ENCODE measurements at regions of chr14 and their contacts with region 1.

Region 1: GRCh38 chr14:67426983-67427606 is 15.1 kb upstream of the PLEK2 start:
- DNase-seq: peak; percentile 45 to 86 (median 73)
- ATAC-seq: peak; percentile 98
- H3K4me3 ChIP-seq: no peak overlapping the region
- H3K4me3 Mint-ChIP-seq: no peak overlapping the region
- H3K27ac ChIP-seq: no peak overlapping the region
- H3K27ac Mint-ChIP-seq: no peak overlapping the region
- H3K4me1 ChIP-seq: no peaks in the 10 kb centered on the region
- H3K4me1 Mint-ChIP-seq: peaks cover 2% of the 10 kb centered on the region
- H3K27me3 ChIP-seq: peaks cover 0 to 2% of the 10 kb centered on the region in 2 experiments
- H3K27me3 Mint-ChIP-seq: peaks cover 10% of the 10 kb centered on the region
- CTCF ChIP-seq: peak; percentile 82

Region 2: GRCh38 chr14:67232081-67232480 is 195.0 kb before region 1 on chr14:
- CTCF ChIA-PET with region 1: no interaction called
- POLR2A ChIA-PET with region 1: no interaction called
- intact Hi-C with region 1: no loop called
- DNase-seq: no peak
- ATAC-seq: no peak
- H3K4me3 ChIP-seq: no peak overlapping the region
- H3K4me3 Mint-ChIP-seq: no peak overlapping the region
- H3K27ac ChIP-seq: no peak overlapping the region
- H3K27ac Mint-ChIP-seq: no peak overlapping the region
- H3K4me1 ChIP-seq: no peaks in the 10 kb centered on the region
- H3K4me1 Mint-ChIP-seq: no peaks in the 10 kb centered on the region
- H3K27me3 ChIP-seq: no peaks in the 10 kb centered on the region
- H3K27me3 Mint-ChIP-seq: no peaks in the 10 kb centered on the region
- CTCF ChIP-seq: no peak

Region 3: GRCh38 chr14:67413801-67414769 is 13.0 kb before region 1 on chr14:
- CTCF ChIA-PET with region 1: interaction called, 13 read pairs
- POLR2A ChIA-PET with region 1: no interaction called
- intact Hi-C with region 1: no loop called
- DNase-seq: peak in 3 of 9 experiments; percentile 10 to 15 (median 14)
- ATAC-seq: no peak
- H3K4me3 ChIP-seq: no peak overlapping the region
- H3K4me3 Mint-ChIP-seq: no peak overlapping the region
- H3K27ac ChIP-seq: no peak overlapping the region
- H3K27ac Mint-ChIP-seq: no peak overlapping the region
- H3K4me1 ChIP-seq: peaks cover 4% of the 10 kb centered on the region
- H3K4me1 Mint-ChIP-seq: peaks cover 3% of the 10 kb centered on the region
- H3K27me3 ChIP-seq: no peaks in the 10 kb centered on the region
- H3K27me3 Mint-ChIP-seq: peaks cover 18% of the 10 kb centered on the region
- CTCF ChIP-seq: no peak

Region 4: GRCh38 chr14:67514650-67515385 is 87.7 kb after region 1 on chr14:
- CTCF ChIA-PET with region 1: interaction called, 13 read pairs
- POLR2A ChIA-PET with region 1: no interaction called
- intact Hi-C with region 1: no loop called
- DNase-seq: peak in 8 of 9 experiments; percentile 11 to 75 (median 43)
- ATAC-seq: peak; percentile 71
- H3K4me3 ChIP-seq: peak overlapping the region; percentile 71 to 75
- H3K4me3 Mint-ChIP-seq: peak overlapping the region; percentile 91
- H3K27ac ChIP-seq: peak overlapping the region; percentile 62 to 79
- H3K27ac Mint-ChIP-seq: peak overlapping the region; percentile 89
- H3K4me1 ChIP-seq: peaks cover 16% of the 10 kb centered on the region
- H3K4me1 Mint-ChIP-seq: peaks cover 36% of the 10 kb centered on the region
- H3K27me3 ChIP-seq: no peaks in the 10 kb centered on the region
- H3K27me3 Mint-ChIP-seq: no peaks in the 10 kb centered on the region
- CTCF ChIP-seq: no peak

Region 5: GRCh38 chr14:67532998-67533753 is 106.1 kb after region 1 on chr14 and contains the start of gene PLEKHH1:
- CTCF ChIA-PET with region 1: interaction called, 30 read pairs
- POLR2A ChIA-PET with region 1: interaction called, 3 read pairs
- intact Hi-C with region 1: loop called in 1 of 2 experiments (anchors 5 kb)
- DNase-seq: peak in 7 of 9 experiments; percentile 11 to 66 (median 51)
- ATAC-seq: peak; percentile 80
- H3K4me3 ChIP-seq: peak within 1 kb of the TSS; percentile 24 to 53
- H3K4me3 Mint-ChIP-seq: peak within 1 kb of the TSS; percentile 80
- H3K27ac ChIP-seq: no peak within 1 kb of the TSS
- H3K27ac Mint-ChIP-seq: no peak within 1 kb of the TSS
- H3K4me1 ChIP-seq: peaks cover 5% of the 10 kb centered on the region
- H3K4me1 Mint-ChIP-seq: peaks cover 7% of the 10 kb centered on the region
- H3K27me3 ChIP-seq: no peaks in the 10 kb centered on the region
- H3K27me3 Mint-ChIP-seq: peaks cover 22% of the 10 kb centered on the region
- CTCF ChIP-seq: no peak
- total RNA-seq, gene PLEKHH1: 0.28 to 0.54 TPM

Region 6: DNA sequence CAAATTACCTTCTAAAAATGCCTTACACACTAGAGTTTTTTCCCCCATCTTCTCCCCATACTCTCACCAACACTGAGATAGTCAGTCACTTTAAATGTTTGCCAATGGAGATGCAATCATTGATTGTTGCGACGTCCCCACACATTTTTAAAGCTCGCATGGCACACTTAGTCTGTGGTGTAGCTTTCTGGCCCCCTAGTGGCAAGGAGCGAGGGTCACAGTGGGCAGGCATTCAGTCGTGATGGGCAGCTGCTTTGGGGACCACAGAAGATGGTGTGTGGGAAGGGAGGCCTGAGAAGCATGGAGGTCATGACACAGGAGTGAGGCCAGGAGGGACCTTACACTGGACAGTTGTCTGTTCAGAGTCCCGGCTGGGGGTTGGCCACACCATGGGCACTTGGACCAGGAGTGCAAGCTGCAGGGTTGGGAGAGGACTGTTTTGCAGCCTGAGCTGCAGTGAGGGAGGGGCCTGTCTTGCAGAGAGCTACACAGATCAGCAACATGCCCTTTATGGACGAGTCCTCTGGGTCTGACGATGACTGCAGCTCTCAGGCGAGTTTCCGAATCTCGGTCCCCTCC is 144.3 kb after region 1 on chr14:
- CTCF ChIA-PET with region 1: interaction called, 411 read pairs
- POLR2A ChIA-PET with region 1: interaction called, 16 read pairs
- intact Hi-C with region 1: loop called in 1 of 2 experiments (anchors 1 kb)
- DNase-seq: peak; percentile 38 to 81 (median 70)
- ATAC-seq: peak; percentile 91
- H3K4me3 ChIP-seq: no peak overlapping the region
- H3K4me3 Mint-ChIP-seq: no peak overlapping the region
- H3K27ac ChIP-seq: no peak overlapping the region
- H3K27ac Mint-ChIP-seq: no peak overlapping the region
- H3K4me1 ChIP-seq: no peaks in the 10 kb centered on the region
- H3K4me1 Mint-ChIP-seq: no peaks in the 10 kb centered on the region
- H3K27me3 ChIP-seq: no peaks in the 10 kb centered on the region
- H3K27me3 Mint-ChIP-seq: peaks cover 6% of the 10 kb centered on the region
- CTCF ChIP-seq: peak; percentile 74

Region 7: GRCh38 chr14:67589204-67589770 is 162.2 kb after region 1 on chr14:
- CTCF ChIA-PET with region 1: interaction called, 48 read pairs
- POLR2A ChIA-PET with region 1: no interaction called
- intact Hi-C with region 1: no loop called
- DNase-seq: no peak
- ATAC-seq: no peak
- H3K4me3 ChIP-seq: no peak overlapping the region
- H3K4me3 Mint-ChIP-seq: no peak overlapping the region
- H3K27ac ChIP-seq: no peak overlapping the region
- H3K27ac Mint-ChIP-seq: no peak overlapping the region
- H3K4me1 ChIP-seq: no peaks in the 10 kb centered on the region
- H3K4me1 Mint-ChIP-seq: no peaks in the 10 kb centered on the region
- H3K27me3 ChIP-seq: no peaks in the 10 kb centered on the region
- H3K27me3 Mint-ChIP-seq: no peaks in the 10 kb centered on the region
- CTCF ChIP-seq: no peak

Region 8: DNA sequence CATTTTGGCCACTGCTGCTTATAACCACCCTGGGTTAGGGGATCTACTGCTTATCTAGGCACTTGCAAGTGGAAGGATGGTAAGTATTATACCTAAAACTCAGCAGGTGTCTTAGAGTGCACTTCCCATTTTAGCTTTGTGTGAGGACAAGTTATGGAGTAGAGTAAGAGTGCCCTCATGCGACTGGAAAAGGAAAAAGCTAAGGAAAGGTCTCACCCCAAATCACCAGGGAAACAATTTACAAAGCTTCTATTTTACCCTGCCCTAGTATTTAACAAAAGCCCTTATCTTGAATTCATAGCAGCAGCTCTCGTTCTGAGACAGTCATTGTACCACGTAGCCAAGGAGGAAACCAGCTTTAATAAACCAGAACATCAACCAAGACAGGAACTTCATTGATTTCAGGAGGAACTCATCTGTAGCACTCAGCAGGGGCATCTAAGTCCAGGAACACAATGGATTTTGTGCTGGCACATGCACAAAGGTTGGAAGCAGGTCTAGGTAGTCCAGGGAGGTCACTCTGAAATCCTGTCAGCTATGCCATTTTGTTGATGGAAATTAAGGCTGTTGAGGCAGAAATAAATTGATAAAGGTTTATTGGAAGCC is 277.5 kb after region 1 on chr14:
- CTCF ChIA-PET with region 1: interaction called, 34 read pairs
- POLR2A ChIA-PET with region 1: interaction called, 3 read pairs
- intact Hi-C with region 1: loop called (anchors 1 kb)
- DNase-seq: peak in 5 of 9 experiments; percentile 8 to 78 (median 22)
- ATAC-seq: peak; percentile 81
- H3K4me3 ChIP-seq: no peak overlapping the region
- H3K4me3 Mint-ChIP-seq: no peak overlapping the region
- H3K27ac ChIP-seq: no peak overlapping the region
- H3K27ac Mint-ChIP-seq: no peak overlapping the region
- H3K4me1 ChIP-seq: no peaks in the 10 kb centered on the region
- H3K4me1 Mint-ChIP-seq: no peaks in the 10 kb centered on the region
- H3K27me3 ChIP-seq: no peaks in the 10 kb centered on the region
- H3K27me3 Mint-ChIP-seq: peaks cover 6% of the 10 kb centered on the region
- CTCF ChIP-seq: peak; percentile 58